Psoas muscle (tissue), 8 donors: ENCODE measurements at regions of chr4 and their contacts with region 1.

Region 1: DNA sequence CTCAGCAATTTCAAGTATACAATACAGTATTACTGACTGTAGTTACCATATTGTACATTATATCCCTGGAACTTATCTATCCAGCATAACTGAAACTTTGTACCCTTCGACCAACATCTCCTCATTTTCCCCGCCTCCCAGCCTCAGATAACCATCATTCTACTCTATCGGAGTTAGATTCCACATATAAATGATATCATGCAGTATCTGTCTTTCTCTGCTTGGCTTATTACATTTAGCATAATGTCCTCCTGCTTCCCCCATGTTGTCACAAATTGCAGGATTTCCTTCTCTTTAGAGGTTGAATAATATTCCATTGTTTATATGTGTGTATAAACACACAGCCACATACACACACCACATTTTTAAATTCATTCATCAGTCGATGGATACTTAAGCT is 218.1 kb downstream of the MAML3 start:
- DNase-seq: no peak
- ATAC-seq: no peak
- H3K4me3 ChIP-seq: no peak overlapping the region
- H3K27ac ChIP-seq: no peak overlapping the region
- H3K4me1 ChIP-seq: no peaks in the 10 kb centered on the region
- H3K27me3 ChIP-seq: no peaks in the 10 kb centered on the region
- CTCF ChIP-seq: no peak

Region 2: GRCh38 chr4:139958739-139959098 is 22.8 kb after region 1 on chr4:
- intact Hi-C with region 1: loop called in 1 of 2 experiments (anchors 2 kb)
- DNase-seq: no peak
- ATAC-seq: no peak
- H3K4me3 ChIP-seq: no peak overlapping the region
- H3K27ac ChIP-seq: no peak overlapping the region
- H3K4me1 ChIP-seq: peaks cover 16% of the 10 kb centered on the region
- H3K27me3 ChIP-seq: no peaks in the 10 kb centered on the region
- CTCF ChIP-seq: no peak